Lower lobe of right lung (tissue), 2 donors: ENCODE measurements at regions of chr17 and their contacts with region 1.

Region 1: DNA sequence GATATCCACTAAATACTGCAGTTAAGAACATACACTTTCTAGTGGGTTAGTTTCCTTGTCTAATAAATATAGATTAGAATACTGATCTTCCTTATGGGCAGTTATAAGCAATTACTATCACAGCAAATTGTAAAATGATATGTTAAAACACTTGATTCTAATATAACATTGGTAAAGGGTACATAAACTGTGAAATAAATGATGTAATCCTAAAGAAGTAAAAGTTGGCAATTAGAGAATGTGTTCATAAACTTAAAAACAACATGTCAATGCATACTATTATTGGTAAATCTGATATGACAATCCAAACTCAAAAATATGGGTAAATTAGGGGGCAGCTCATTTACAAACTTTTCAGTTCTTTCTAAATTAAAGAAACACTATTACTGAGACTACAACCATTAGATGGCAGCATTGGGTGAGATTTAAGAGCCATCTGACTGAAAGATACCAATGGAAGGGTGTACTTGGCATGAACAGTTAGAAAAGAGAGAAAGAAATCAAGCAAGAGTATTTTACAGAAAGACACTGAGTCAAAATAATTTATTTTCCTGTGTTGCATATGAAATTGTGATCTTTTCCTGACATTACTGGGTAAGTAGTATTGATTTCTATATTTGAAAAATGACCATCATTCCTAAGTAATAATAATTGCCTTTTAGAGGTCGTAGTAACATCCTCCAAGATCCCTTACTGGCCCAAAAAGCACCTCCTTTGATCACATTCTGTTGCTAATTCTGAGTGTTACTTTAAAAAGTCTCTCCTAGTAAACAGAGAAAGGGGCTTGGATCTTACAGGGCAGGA is 119.6 kb downstream of the SPAG9 start:
- DNase-seq: no peak
- ATAC-seq: peak; percentile 66
- H3K4me3 ChIP-seq: no peak overlapping the region
- H3K27ac ChIP-seq: no peak overlapping the region
- H3K4me1 ChIP-seq: no peaks in the 10 kb centered on the region
- H3K27me3 ChIP-seq: no peaks in the 10 kb centered on the region
- CTCF ChIP-seq: peak; percentile 52

Region 2: DNA sequence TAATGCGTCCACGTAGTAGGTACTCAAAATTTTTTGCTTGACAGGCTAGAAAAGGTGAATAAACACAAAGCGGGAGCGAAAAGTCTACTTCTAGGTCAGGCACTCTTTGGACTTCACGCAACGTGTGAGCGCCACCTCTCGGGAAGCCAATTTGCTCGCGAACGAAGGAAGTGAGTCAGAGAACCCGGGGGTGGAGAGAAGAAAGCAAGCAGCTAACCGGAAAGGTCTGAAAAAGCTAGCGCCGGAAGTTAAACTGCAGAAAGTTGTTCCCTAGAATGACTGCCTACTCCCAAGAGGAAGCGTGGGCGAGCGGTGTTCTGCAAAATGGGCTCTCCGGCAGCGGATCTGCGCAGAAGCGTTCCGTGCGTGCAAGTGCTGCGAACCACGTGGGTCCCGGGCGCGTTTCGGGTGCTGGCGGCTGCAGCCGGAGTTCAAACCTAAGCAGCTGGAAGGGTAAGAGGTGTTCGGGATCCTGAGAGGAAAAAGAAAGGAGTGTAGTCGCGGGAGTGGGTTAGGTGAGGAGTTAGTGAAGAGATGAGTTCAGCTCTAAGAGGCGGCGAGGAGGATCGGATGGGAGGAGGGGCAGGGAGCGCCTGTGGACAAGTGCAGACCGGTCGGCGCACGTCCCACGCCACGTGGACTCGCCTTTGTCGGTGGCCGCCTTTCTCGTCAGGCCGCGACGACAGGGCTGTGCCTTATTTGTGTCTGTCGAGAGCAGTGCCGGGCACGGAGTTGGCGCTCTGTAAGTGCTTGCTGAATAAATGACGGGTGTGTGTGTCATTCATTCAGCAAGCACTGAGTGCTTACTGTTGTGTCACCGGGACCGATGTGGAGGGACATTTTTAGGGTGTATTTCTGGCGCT is 152.4 kb after region 1 on chr17 and contains the start of gene NME1:
- intact Hi-C with region 1: loop called (anchors 5 kb)
- DNase-seq: peak; percentile 96
- ATAC-seq: peak; percentile 99
- H3K4me3 ChIP-seq: peak within 1 kb of the TSS; percentile 67
- H3K27ac ChIP-seq: peak within 1 kb of the TSS; percentile 81
- H3K4me1 ChIP-seq: peaks cover 20% of the 10 kb centered on the region
- H3K27me3 ChIP-seq: no peaks in the 10 kb centered on the region
- CTCF ChIP-seq: peak; percentile 87
- total RNA-seq, gene NME1: 24.0 TPM